Natural killer cell (primary cell): ENCODE measurements at regions of chr9 and their contacts with region 1.

Region 1: DNA sequence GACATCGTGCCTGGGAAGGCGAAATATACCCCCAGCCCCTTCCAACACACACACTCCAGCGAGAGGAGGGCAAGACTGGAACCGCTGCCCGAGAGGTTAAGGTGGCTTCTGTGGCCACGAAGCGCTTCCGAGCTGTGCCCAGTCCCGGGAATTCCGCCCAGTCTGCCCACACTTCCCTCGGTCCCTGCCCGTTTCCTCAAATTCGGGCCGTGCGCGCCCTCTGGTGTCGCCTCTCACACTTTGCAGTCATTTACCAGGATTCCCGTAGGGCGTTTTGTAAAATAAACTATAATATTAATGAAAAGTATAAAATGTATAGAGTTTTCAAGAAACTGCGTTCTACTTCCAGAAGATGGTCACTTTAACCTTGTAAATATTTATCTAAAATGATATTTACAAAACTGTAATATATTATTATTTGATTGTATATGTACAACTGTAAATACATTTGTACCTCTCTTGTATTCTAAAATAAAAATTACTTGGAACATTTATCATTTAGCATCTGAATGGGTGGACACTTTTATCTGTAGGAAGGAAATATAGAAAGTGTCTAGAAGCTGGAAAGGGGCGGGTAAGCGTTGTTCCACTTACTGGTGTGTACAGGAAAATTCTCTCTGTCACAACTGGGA is 11.0 kb upstream of the EXOSC2 start:
- DNase-seq: peak; percentile 53 to 79
- ATAC-seq: peak; percentile 30 to 56 (median 52)
- H3K4me3 ChIP-seq: peak overlapping the region; percentile 64
- H3K4me3 Mint-ChIP-seq: peak overlapping the region; percentile 97
- H3K27ac ChIP-seq: no peak overlapping the region
- H3K27ac Mint-ChIP-seq: peak overlapping the region; percentile 45 to 85
- H3K4me1 ChIP-seq: peaks cover 15% of the 10 kb centered on the region
- H3K4me1 Mint-ChIP-seq: peaks cover 6 to 10% of the 10 kb centered on the region in 2 donors
- H3K27me3 ChIP-seq: no peaks in the 10 kb centered on the region
- H3K27me3 Mint-ChIP-seq: no peaks in the 10 kb centered on the region
- CTCF ChIP-seq: peak; percentile 93

Region 2: GRCh38 chr9:130461218-130461630 is 221.4 kb before region 1 on chr9:
- intact Hi-C with region 1: loop called (anchors 1 kb)
- DNase-seq: peak; percentile 66 to 83
- ATAC-seq: peak; percentile 61 to 78 (median 62)
- H3K4me3 ChIP-seq: no peak overlapping the region
- H3K4me3 Mint-ChIP-seq: no peak overlapping the region
- H3K27ac ChIP-seq: no peak overlapping the region
- H3K27ac Mint-ChIP-seq: no peak overlapping the region
- H3K4me1 ChIP-seq: no peaks in the 10 kb centered on the region
- H3K4me1 Mint-ChIP-seq: no peaks in the 10 kb centered on the region
- H3K27me3 ChIP-seq: no peaks in the 10 kb centered on the region
- H3K27me3 Mint-ChIP-seq: peaks cover 8 to 10% of the 10 kb centered on the region in 2 donors
- CTCF ChIP-seq: peak; percentile 85